Ovary (tissue), 10 donors: ENCODE measurements at regions of chr7 and their contacts with region 1.

Region 1: GRCh38 chr7:67302113-67303039 is 305.7 kb downstream of the TYW1 start:
- DNase-seq: peak; percentile 98 to 100 (median 99)
- H3K4me3 ChIP-seq: peak overlapping the region; percentile 78
- H3K27ac ChIP-seq: peak overlapping the region; percentile 71 to 93
- H3K4me1 ChIP-seq: peaks cover 5% of the 10 kb centered on the region
- H3K27me3 ChIP-seq: no peaks in the 10 kb centered on the region
- CTCF ChIP-seq: peak; percentile 50 to 77 (median 69)
- EP300 ChIP-seq: no peak
- POLR2A ChIP-seq: peak; percentile 65

Region 2: DNA sequence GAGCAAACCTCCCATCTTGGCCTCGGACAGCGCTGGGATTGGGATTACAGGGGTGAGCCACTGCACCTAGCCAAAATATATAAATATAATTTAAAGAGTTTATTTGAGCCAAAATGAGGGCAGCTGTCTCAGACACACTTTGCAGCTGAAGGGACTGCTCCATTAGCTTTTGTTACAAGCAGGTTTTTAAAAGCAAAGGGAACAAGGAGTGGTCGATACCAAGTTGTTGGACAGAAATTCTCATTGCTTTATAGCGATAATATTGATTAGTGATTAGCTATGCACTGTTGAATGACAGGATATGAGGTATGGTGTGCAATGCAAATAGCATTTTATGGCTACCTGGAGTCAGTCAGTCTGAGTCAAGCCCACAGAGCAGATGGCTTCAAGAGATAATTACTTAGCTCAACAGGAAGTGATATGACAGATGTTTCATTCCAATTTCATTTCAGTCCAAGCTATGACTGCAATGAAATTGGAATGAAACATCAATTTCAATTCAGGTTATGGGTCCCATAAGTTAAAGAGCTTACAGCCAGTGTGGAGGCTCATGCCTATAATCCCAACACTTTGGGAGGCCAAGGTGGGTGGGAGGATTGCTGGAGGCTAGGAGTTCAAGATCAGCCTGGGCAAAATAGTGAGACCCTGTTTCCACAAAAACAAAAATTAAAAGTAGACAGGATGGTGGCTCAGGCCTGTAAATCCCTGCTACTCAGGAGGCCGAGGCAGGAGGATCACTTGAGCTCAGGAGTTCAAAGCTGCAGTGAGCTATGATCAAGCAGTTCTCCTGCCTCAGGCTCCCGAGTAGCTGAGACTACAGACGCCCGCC is 282.6 kb before region 1 on chr7:
- intact Hi-C with region 1: no loop called
- DNase-seq: no peak
- H3K4me3 ChIP-seq: no peak overlapping the region
- H3K27ac ChIP-seq: no peak overlapping the region
- H3K4me1 ChIP-seq: no peaks in the 10 kb centered on the region
- H3K27me3 ChIP-seq: no peaks in the 10 kb centered on the region
- CTCF ChIP-seq: no peak
- EP300 ChIP-seq: no peak
- POLR2A ChIP-seq: no peak

Region 3: DNA sequence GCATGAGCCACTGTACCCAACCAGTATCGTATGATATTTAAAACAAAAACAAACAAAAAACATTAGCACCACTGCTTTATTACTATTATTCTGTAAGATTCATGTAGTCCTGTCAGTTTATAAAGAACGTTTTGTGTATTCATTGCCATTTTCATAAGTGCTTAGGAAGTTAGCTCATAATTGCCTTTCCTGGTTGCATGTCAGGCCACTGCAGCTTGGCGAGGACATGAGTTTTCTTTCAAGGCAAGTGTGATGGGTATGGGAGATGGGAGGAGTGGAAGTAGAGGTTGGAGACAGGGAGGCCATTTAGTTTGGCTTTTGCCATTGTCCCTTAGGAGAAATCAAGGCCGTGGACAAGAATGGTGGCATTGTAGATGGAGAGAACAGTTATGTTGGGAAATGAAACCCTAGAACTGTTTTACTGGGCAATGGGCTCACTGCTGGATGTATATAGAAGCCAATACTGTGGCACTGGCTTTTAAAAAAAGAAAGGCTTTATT is 256.8 kb before region 1 on chr7:
- intact Hi-C with region 1: loop called in 1 of 4 experiments (anchors 10 kb)
- DNase-seq: no peak
- H3K4me3 ChIP-seq: no peak overlapping the region
- H3K27ac ChIP-seq: no peak overlapping the region
- H3K4me1 ChIP-seq: peaks cover 3% of the 10 kb centered on the region
- H3K27me3 ChIP-seq: no peaks in the 10 kb centered on the region
- CTCF ChIP-seq: no peak
- EP300 ChIP-seq: no peak
- POLR2A ChIP-seq: no peak

Region 4: GRCh38 chr7:67723591-67723990 is 421.2 kb after region 1 on chr7:
- intact Hi-C with region 1: no loop called
- DNase-seq: no peak
- H3K4me3 ChIP-seq: no peak overlapping the region
- H3K27ac ChIP-seq: peak overlapping the region; percentile 35 to 85
- H3K4me1 ChIP-seq: peaks cover 3% of the 10 kb centered on the region
- H3K27me3 ChIP-seq: no peaks in the 10 kb centered on the region
- CTCF ChIP-seq: no peak
- EP300 ChIP-seq: no peak
- POLR2A ChIP-seq: no peak